Activated T-helper 1 cell treated with anti-CD3 and anti-CD28 coated beads, Interleukin-12 subunit alpha, Interleukin-12 subunit beta, Interleukin-2, Interleukin-4 antibody, amounts not matched to agents 30 ng/mL and 10 ng/mL and 1 ng/mL, durations not matched to agents 14 hours and 24 hours and 36 hours (primary cell): ENCODE measurements at regions of chr13 and their contacts with region 1.

Region 1: GRCh38 chr13:108200781-108201398 is 14.4 kb downstream of the LIG4 start:
- DNase-seq: no peak
- H3K4me3 Mint-ChIP-seq: no peak overlapping the region
- H3K27ac Mint-ChIP-seq: no peak overlapping the region
- H3K4me1 Mint-ChIP-seq: peaks cover 29% of the 10 kb centered on the region
- H3K27me3 Mint-ChIP-seq: peaks cover 9% of the 10 kb centered on the region

Region 2: GRCh38 chr13:108212886-108213285 is 12.0 kb after region 1 on chr13:
- intact Hi-C with region 1: loop called (anchors 1 kb)
- DNase-seq: no peak
- H3K4me3 Mint-ChIP-seq: peak overlapping the region; percentile 37
- H3K27ac Mint-ChIP-seq: no peak overlapping the region
- H3K4me1 Mint-ChIP-seq: peaks cover 44% of the 10 kb centered on the region
- H3K27me3 Mint-ChIP-seq: peaks cover 1% of the 10 kb centered on the region

Region 3: GRCh38 chr13:109297628-109298027 is 1096.7 kb after region 1 on chr13:
- intact Hi-C with region 1: no loop called
- DNase-seq: no peak
- H3K4me3 Mint-ChIP-seq: no peak overlapping the region
- H3K27ac Mint-ChIP-seq: no peak overlapping the region
- H3K4me1 Mint-ChIP-seq: no peaks in the 10 kb centered on the region
- H3K27me3 Mint-ChIP-seq: no peaks in the 10 kb centered on the region